ENCODE measurements at regions of chr7 and their contacts with region 1.

Region 1: DNA sequence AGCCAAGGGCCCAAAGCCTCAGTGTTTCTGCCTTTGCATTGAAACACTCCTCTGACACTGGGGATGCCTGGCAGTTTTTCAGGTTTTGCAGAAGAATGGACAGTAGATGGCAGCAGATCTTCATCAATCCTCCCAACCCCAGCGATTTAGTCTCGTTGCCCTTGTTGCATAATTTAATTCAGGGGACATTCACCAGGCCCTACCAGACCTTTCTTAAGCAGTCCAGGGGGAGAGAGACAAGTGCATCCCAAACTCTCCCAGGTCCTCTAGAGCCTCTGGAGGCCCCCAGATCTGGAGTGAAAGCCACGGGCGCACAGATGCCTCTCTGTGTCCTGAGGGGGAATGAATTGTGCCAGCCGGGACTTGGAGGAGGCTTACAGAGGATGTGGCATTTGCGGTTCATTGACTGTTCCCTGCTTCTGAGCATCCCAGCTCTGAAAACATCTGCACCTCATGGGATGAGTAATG is 29.6 kb downstream of the MINDY4 start:
- DNase-seq: peak in 1 of 3 donors; percentile 53
- ATAC-seq: peak; percentile 65 to 66
- H3K4me3 ChIP-seq: no peak overlapping the region
- H3K27ac ChIP-seq: no peak overlapping the region
- H3K4me1 ChIP-seq: peaks cover 9% of the 10 kb centered on the region
- H3K27me3 ChIP-seq: no peaks in the 10 kb centered on the region

Region 2: DNA sequence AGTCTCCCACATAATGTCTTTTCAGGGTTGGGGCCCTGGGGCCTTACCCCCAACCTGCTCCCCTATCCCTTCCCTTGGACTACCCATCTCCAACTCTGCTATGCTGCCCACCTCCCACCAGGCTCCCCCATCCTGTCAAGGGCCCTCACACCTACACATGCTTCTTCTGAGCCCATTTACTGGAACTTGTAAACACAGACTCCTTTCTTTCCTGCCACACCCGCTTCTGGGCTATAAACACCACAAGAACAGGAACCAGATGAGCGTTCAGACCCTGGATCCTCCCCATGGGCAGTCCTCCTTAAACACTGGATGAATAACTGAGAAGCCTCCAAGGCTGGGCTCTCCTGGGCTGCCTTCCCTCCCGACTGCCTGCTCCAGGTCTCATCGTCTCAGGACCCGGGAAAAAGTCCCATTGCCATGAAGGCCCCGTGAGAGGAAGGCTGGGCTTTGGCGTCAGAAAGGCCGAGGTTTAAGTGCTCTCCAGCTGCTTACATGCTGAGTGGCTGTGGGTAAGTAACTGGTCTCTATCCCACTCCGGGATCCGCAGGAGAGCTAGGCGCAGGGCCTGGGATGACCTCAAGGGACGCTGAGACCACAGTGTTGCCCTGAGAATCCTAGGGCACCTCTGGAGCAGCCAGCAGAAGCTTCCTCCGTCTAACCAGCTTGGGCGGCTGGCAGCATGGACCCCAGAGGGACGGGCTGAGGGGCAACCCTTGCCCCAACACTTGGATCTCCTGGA is 102.9 kb before region 1 on chr7:
- intact Hi-C with region 1: no loop called
- DNase-seq: no peak
- ATAC-seq: peak; percentile 7 to 61
- H3K4me3 ChIP-seq: no peak overlapping the region
- H3K27ac ChIP-seq: no peak overlapping the region
- H3K4me1 ChIP-seq: peaks cover 3% of the 10 kb centered on the region
- H3K27me3 ChIP-seq: no peaks in the 10 kb centered on the region

Region 3: GRCh38 chr7:30963805-30964204 is 163.0 kb after region 1 on chr7 and contains the start of gene GHRHR:
- intact Hi-C with region 1: no loop called
- DNase-seq: no peak
- ATAC-seq: peak in 1 of 2 donors; percentile 24
- H3K4me3 ChIP-seq: no peak within 1 kb of the TSS
- H3K27ac ChIP-seq: no peak within 1 kb of the TSS
- H3K4me1 ChIP-seq: no peaks in the 10 kb centered on the region
- H3K27me3 ChIP-seq: no peaks in the 10 kb centered on the region
- total RNA-seq, gene GHRHR: not detected

Region 4: DNA sequence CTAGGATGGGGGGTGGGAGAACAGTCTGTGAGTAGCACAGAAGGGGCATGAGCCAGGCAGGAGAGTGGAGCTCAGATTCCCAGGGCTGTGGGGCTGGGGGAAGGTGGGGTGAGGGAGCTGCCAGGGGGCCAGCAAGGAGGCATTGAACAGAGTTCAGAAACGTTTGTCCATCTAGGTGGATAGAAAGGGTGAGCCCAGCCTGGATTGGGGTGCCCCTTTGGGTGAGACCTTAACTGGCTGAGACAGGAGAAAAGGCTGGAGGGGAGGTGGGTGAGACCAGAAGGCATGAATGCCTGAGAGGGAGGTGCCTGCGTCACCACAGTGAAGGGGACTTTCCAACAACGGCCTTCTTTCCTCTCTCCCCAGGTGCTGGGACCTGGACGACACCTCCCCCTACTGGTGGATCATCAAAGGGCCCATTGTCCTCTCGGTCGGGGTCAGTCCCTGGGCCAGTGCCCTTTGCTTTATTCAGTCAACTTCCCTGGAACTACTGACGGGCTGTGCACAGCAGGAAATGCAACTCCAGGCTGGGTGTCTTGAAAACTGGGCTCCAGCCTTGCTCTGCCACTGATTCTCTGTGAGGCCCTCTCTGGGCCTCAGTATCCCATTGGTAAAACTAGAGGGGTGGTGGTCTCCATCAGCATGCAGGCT is 173.9 kb after region 1 on chr7:
- intact Hi-C with region 1: loop called (anchors 2 to 10 kb)
- DNase-seq: peak; percentile 55 to 70 (median 67)
- ATAC-seq: peak; percentile 72 to 87
- H3K4me3 ChIP-seq: no peak overlapping the region
- H3K27ac ChIP-seq: no peak overlapping the region
- H3K4me1 ChIP-seq: peaks cover 2% of the 10 kb centered on the region
- H3K27me3 ChIP-seq: no peaks in the 10 kb centered on the region

Region 5: GRCh38 chr7:31122649-31123058 is 321.8 kb after region 1 on chr7:
- intact Hi-C with region 1: loop called in 3 of 4 experiments (anchors 5 kb)
- DNase-seq: peak; percentile 65 to 82 (median 69)
- ATAC-seq: peak; percentile 77 to 86
- H3K4me3 ChIP-seq: no peak overlapping the region
- H3K27ac ChIP-seq: no peak overlapping the region
- H3K4me1 ChIP-seq: no peaks in the 10 kb centered on the region
- H3K27me3 ChIP-seq: no peaks in the 10 kb centered on the region

Region 6: GRCh38 chr7:31134246-31135188 is 333.7 kb after region 1 on chr7:
- intact Hi-C with region 1: loop called in 1 of 4 experiments (anchors 5 kb)
- DNase-seq: peak; percentile 76 to 90 (median 85)
- ATAC-seq: peak; percentile 97
- H3K4me3 ChIP-seq: no peak overlapping the region
- H3K27ac ChIP-seq: no peak overlapping the region
- H3K4me1 ChIP-seq: no peaks in the 10 kb centered on the region
- H3K27me3 ChIP-seq: no peaks in the 10 kb centered on the region